SK-N-SH (cell line): ENCODE measurements at regions of chrX and their contacts with region 1.

Region 1: GRCh38 chrX:46686003-46686645 is 72.8 kb downstream of the SLC9A7 start:
- DNase-seq: peak; percentile 41
- H3K4me3 ChIP-seq: no peak overlapping the region
- H3K27ac ChIP-seq: no peak overlapping the region
- H3K4me1 ChIP-seq: no peaks in the 10 kb centered on the region
- H3K27me3 ChIP-seq: no peaks in the 10 kb centered on the region
- CTCF ChIP-seq: peak; percentile 88
- EP300 ChIP-seq: no peak
- RAD21 ChIP-seq: peak; percentile 69

Region 2: GRCh38 chrX:46601283-46601682 is 84.8 kb before region 1 on chrX:
- CTCF ChIA-PET with region 1: no interaction called
- POLR2A ChIA-PET with region 1: no interaction called
- DNase-seq: peak; percentile 52
- H3K4me3 ChIP-seq: no peak overlapping the region
- H3K27ac ChIP-seq: peak overlapping the region in 1 of 2 experiments; percentile 90; a peak in 3 of 4 replicates
- H3K4me1 ChIP-seq: peaks cover 0 to 21% of the 10 kb centered on the region in 2 experiments; a peak in 1 of 4 replicates
- H3K27me3 ChIP-seq: peaks cover 12% of the 10 kb centered on the region; the same call in 1 of the 2 replicates
- CTCF ChIP-seq: no peak
- EP300 ChIP-seq: peak in 1 of 2 experiments; percentile 55; a peak in 1 of 4 replicates
- RAD21 ChIP-seq: no peak

Region 3: DNA sequence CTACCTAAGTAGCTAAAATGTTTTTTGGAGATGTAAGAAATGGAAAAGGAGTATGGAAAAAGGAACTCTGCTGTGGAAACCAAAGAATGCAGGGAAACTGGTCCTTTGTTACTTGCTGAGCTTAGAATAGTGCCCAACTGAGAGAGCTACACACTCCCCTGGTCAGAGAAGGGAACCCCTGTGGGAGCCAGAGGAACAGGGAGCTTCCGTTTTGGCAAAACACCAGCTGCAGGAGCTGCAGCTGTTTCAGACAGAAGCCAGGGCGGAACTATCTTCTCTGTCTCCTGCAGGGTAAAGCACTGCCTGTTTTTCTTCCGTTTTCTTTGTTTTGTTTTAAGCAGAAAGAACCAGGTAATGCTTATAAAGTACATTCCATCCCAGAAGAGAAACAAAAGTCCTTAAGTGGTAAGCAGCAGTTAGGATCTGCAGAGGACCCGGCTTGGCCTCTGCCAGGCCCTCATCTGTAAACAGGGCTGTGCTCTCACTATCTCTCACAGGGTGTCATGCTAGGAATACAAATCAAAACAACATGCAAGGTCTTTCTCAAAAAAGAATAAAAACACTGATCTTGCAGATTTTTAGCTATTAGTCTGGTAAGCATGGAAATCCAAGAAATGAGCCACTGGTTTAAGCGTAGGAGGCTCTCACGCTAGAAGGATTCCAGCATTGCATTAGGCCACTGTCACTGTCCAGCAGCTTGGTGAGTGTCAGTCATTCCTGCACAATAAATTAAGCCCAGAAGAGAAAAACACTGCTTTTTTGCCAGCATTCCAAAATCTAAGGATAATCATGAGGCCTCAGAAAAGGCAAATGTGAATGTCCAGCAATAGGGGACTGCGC is 36.5 kb before region 1 on chrX:
- CTCF ChIA-PET with region 1: interaction called, 13 read pairs
- POLR2A ChIA-PET with region 1: no interaction called
- DNase-seq: peak; percentile 52
- H3K4me3 ChIP-seq: no peak overlapping the region
- H3K27ac ChIP-seq: peak overlapping the region in 1 of 2 experiments; percentile 39; a peak in 2 of 4 replicates
- H3K4me1 ChIP-seq: peaks cover 0 to 4% of the 10 kb centered on the region in 2 experiments; a peak in 1 of 4 replicates
- H3K27me3 ChIP-seq: peaks cover 9% of the 10 kb centered on the region; the same call in 1 of the 2 replicates
- CTCF ChIP-seq: no peak
- EP300 ChIP-seq: no peak
- RAD21 ChIP-seq: no peak